CD4-positive, alpha-beta T cell (primary cell): ENCODE measurements at regions of chr1 and their contacts with region 1.

Region 1: DNA sequence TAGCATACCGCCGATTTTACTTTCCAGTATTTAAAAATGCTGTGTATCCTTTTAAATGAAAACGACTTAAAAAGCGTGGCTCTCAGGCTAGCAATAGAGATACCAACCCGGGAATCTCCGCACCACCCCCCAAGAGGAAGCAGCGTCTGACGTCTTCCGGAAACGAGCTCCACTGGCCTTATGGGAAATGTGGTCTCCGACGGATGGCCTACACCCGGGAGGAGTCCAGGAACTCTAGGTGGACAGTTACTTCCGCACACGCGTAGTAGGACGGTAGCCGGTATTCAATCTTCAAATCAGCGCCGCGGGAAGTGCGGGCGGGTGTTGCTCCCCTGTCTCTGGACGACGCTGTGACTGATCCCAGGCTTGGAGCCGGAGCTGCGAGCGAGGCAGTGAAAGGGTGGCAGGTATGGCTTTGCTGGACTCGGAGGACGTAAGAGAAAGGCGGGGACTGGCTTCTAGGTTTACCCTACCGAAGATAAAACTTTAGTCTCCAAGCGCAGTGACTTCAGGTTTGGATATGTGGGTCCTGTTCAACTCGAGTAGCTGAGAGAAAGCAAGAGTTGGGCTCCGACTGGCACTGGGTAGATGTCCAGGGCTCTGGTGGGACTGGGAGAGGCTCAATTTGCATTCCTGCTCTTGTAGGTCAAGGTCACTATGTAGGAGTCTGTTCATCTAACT is at the start of gene ZNF684:
- DNase-seq: peak; percentile 65 to 96 (median 77)
- ATAC-seq: peak; percentile 94
- H3K4me3 ChIP-seq: peak within 1 kb of the TSS; percentile 80
- H3K4me3 Mint-ChIP-seq: peak within 1 kb of the TSS; percentile 95
- H3K27ac ChIP-seq: peak within 1 kb of the TSS; percentile 69 to 71
- H3K27ac Mint-ChIP-seq: peak within 1 kb of the TSS; percentile 78
- H3K4me1 ChIP-seq: peaks cover 12% of the 10 kb centered on the region
- H3K4me1 Mint-ChIP-seq: peaks cover 28% of the 10 kb centered on the region
- H3K27me3 ChIP-seq: no peaks in the 10 kb centered on the region
- H3K27me3 Mint-ChIP-seq: peaks cover 7% of the 10 kb centered on the region
- CTCF ChIP-seq: no peak
- total RNA-seq, gene ZNF684: 1.3 to 1.7 TPM

Region 2: GRCh38 chr1:40040511-40041465 is 490.7 kb before region 1 on chr1 and contains the start of gene CAP1:
- CTCF ChIA-PET with region 1: no interaction called
- POLR2A ChIA-PET with region 1: interaction called, 3 read pairs
- intact Hi-C with region 1: loop called in 1 of 2 experiments (anchors 5 kb)
- DNase-seq: peak; percentile 99 to 100 (median 100)
- ATAC-seq: peak; percentile 88
- H3K4me3 ChIP-seq: peak within 1 kb of the TSS; percentile 100
- H3K4me3 Mint-ChIP-seq: peak within 1 kb of the TSS; percentile 98
- H3K27ac ChIP-seq: peak within 1 kb of the TSS; percentile 88 to 93
- H3K27ac Mint-ChIP-seq: peak within 1 kb of the TSS; percentile 95
- H3K4me1 ChIP-seq: peaks cover 77% of the 10 kb centered on the region
- H3K4me1 Mint-ChIP-seq: peaks cover 83% of the 10 kb centered on the region
- H3K27me3 ChIP-seq: no peaks in the 10 kb centered on the region
- H3K27me3 Mint-ChIP-seq: no peaks in the 10 kb centered on the region
- CTCF ChIP-seq: no peak
- total RNA-seq, gene CAP1: 121 to 126 TPM

Region 3: DNA sequence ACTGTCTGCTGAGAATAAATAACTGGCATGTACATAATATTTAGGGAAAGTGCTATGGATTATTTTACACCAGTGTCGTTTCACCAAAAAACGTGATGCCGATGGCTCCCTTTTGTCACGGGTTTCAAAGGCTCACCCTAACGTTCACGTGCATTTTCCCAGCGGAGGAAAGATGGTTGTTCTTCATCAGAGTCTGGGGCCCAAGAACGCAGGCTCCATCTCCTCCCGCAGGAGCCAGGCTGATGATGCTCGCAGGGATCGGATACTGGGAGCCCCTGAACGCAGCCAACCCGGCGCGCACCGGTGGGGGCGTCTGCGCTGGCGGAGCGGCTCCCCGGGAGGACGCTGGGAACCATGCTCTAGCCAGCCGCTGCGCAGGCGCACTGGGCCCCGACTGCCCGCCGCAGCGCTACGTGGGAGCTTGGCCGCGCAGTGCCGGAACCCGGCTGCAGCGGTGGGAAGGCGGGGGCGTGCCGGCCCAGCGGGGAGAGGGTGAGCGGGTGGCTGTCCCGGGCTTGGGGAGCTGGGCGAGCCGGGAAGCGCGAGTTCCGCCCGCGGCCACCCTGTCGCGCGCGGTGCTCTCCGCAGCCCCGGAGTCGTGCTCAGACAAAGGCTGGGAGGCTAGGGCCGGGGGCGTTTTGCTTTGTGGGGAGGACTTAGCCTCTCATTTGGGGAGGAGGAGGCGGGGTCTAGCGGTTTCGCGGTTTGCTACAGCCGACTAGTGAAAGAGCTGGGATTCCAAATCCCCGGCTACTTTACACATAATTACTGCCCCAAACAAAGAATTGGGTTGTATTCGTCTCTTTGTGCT is 81.6 kb before region 1 on chr1 and contains the start of gene ZFP69B:
- CTCF ChIA-PET with region 1: interaction called, 6 read pairs
- POLR2A ChIA-PET with region 1: interaction called, 8 read pairs
- intact Hi-C with region 1: loop called in 1 of 2 experiments (anchors 2 kb)
- DNase-seq: peak; percentile 70 to 93 (median 82)
- ATAC-seq: peak; percentile 65
- H3K4me3 ChIP-seq: peak within 1 kb of the TSS; percentile 78
- H3K4me3 Mint-ChIP-seq: peak within 1 kb of the TSS; percentile 91
- H3K27ac ChIP-seq: peak within 1 kb of the TSS; percentile 51 to 70
- H3K27ac Mint-ChIP-seq: peak within 1 kb of the TSS; percentile 84
- H3K4me1 ChIP-seq: peaks cover 17% of the 10 kb centered on the region
- H3K4me1 Mint-ChIP-seq: peaks cover 27% of the 10 kb centered on the region
- H3K27me3 ChIP-seq: no peaks in the 10 kb centered on the region
- H3K27me3 Mint-ChIP-seq: no peaks in the 10 kb centered on the region
- CTCF ChIP-seq: no peak
- total RNA-seq, gene ZFP69B: 1.8 to 2.4 TPM

Region 4: GRCh38 chr1:40508375-40509341 is 22.9 kb before region 1 on chr1 and contains the start of gene EXO5:
- CTCF ChIA-PET with region 1: interaction called, 10 read pairs
- POLR2A ChIA-PET with region 1: interaction called, 13 read pairs
- intact Hi-C with region 1: loop called in 1 of 2 experiments (anchors 2 kb)
- DNase-seq: peak; percentile 53 to 87 (median 77)
- ATAC-seq: peak; percentile 98
- H3K4me3 ChIP-seq: peak within 1 kb of the TSS; percentile 97
- H3K4me3 Mint-ChIP-seq: peak within 1 kb of the TSS; percentile 88
- H3K27ac ChIP-seq: peak within 1 kb of the TSS; percentile 5 to 35
- H3K27ac Mint-ChIP-seq: peak within 1 kb of the TSS; percentile 50
- H3K4me1 ChIP-seq: peaks cover 17% of the 10 kb centered on the region
- H3K4me1 Mint-ChIP-seq: peaks cover 15% of the 10 kb centered on the region
- H3K27me3 ChIP-seq: no peaks in the 10 kb centered on the region
- H3K27me3 Mint-ChIP-seq: no peaks in the 10 kb centered on the region
- CTCF ChIP-seq: no peak
- total RNA-seq, gene EXO5: 4.5 to 4.9 TPM